Psoas muscle (tissue), 8 donors: ENCODE measurements at regions of chr16 and their contacts with region 1.

Region 1: GRCh38 chr16:66872943-66873684 is 7.2 kb upstream of the PDP2 start:
- DNase-seq: peak; percentile 93 to 94
- ATAC-seq: peak; percentile 92 to 97 (median 94)
- H3K4me3 ChIP-seq: peak overlapping the region; percentile 61
- H3K27ac ChIP-seq: peak overlapping the region; percentile 21
- H3K4me1 ChIP-seq: peaks cover 4% of the 10 kb centered on the region
- H3K27me3 ChIP-seq: no peaks in the 10 kb centered on the region
- CTCF ChIP-seq: peak; percentile 91

Region 2: DNA sequence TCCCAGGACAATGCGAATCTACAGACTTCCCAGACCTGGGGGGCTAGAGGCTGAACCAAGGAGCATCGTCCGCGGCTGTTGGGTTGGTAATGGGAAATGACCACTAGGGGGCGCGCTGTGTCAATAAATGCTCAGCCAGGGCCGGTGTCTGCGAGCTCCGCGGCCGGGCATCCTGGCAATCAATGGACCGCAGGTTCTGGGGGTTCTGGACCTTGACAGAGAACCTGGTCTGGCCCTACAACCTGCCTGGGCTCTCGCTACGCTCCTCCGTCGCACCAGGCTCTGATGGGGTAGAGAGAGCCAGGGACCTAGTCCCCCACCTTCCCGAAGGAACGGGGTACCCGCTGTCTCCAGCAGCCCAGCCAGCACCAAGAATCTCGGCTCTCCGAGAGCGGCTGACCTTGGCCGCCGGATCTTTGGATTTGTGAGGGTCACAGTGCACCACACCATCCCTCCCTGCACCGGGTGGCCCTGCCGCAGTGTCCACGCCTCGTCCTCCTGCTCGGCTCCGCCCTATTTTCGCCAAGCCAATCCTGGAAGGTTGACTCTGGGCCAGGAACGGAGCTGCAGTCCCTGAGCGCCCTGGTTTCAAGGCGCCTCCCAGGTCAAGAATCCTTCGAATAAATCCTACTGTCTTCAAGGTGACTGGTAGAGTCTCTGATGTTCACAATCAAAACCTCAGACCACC is 466.4 kb before region 1 on chr16:
- intact Hi-C with region 1: loop called (anchors 5 kb)
- DNase-seq: peak; percentile 85 to 91
- ATAC-seq: peak; percentile 88 to 97 (median 91)
- H3K4me3 ChIP-seq: peak overlapping the region; percentile 64
- H3K27ac ChIP-seq: no peak overlapping the region
- H3K4me1 ChIP-seq: no peaks in the 10 kb centered on the region
- H3K27me3 ChIP-seq: peaks cover 0 to 16% (median 0%) of the 10 kb centered on the region in 3 donors
- CTCF ChIP-seq: peak; percentile 89

Region 3: DNA sequence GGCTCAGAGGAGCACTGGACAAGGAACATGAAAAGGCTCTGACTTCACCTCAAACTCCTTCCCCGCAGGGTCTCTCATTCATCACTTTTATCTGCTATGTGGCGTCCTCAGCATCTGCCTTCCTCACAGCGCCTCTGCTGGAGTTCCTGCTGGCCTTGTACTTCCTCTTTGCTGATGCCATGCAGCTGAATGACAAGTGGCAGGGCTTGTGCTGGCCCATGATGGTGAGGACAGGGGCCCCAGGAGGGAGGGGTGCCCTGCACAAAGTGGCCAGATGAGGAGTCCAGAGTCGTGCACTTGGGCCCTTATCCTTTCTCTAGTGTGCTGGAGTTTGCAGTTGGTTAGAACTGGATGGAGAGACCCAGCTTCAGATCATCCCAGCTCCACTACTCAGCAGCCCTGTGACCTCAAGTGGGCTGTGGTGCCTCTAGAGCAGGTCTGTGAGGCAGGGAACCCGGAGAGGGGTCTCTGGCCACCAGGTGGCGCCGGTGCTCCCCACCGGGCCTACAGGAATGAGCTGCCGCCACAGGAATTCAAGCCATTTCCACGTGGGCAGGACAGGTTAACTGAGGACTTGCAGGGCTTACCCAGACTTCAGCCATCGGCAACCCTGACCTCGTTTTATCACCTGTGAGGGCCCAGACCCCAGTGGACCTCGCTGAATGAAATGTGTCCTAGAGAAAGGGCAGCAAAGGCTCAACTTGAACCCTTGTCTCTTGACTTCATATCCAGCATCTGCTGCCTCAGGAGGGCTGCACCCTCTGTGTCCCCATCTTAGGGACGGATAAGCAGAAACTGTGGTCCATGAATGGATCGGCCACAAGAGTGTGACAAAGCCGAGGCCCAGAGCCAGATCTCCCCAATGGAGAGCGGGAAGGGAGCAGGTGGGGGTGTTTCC is 264.6 kb before region 1 on chr16:
- intact Hi-C with region 1: loop called (anchors 2 kb)
- DNase-seq: peak; percentile 90 to 92
- ATAC-seq: peak; percentile 86 to 92 (median 90)
- H3K4me3 ChIP-seq: no peak overlapping the region
- H3K27ac ChIP-seq: no peak overlapping the region
- H3K4me1 ChIP-seq: no peaks in the 10 kb centered on the region
- H3K27me3 ChIP-seq: peaks cover 0 to 10% (median 7%) of the 10 kb centered on the region in 3 donors
- CTCF ChIP-seq: peak; percentile 92

Region 4: DNA sequence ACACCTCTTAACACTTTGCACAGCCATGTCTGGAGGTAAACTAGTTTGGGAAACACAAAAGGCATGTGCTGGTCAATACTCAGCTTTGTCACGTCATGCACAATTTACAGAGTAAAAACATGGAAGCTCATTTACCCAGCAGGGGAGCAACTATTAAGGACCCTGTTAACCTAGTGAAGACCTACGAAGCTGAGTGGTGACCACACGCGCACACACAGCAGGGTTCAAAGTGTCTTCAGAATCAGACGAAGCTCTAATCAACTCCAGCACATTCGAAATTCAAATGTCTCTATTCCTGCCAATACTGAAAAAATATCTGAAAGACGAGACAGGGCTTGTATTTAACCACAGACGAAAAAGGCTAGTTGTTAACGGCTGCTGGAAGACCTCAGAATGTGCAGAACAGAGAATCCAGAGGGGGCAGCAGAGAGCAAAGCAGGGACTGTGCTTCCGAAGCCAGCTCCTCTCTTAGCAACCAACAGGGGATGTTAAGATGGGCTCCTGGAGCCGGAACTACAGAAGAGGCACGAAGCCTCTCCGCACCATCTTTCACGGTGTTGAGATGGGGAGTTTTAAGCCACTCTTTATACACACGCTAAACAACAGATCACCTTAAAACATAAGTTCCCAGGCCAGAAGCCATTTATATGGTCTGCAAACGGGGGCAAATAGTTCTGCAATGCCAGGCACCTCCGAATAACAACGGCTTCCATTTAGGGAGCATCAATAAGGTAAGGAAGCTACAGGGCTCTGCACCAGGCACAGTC is 222.2 kb before region 1 on chr16:
- intact Hi-C with region 1: loop called in 1 of 2 experiments (anchors 5 kb)
- DNase-seq: peak; percentile 65 to 76
- ATAC-seq: peak; percentile 89 to 97 (median 92)
- H3K4me3 ChIP-seq: peak overlapping the region; percentile 11
- H3K27ac ChIP-seq: no peak overlapping the region
- H3K4me1 ChIP-seq: peaks cover 9% of the 10 kb centered on the region
- H3K27me3 ChIP-seq: no peaks in the 10 kb centered on the region
- CTCF ChIP-seq: peak; percentile 93

Region 5: GRCh38 chr16:66660422-66661209 is 212.5 kb before region 1 on chr16:
- intact Hi-C with region 1: loop called in 1 of 2 experiments (anchors 5 kb)
- DNase-seq: peak; percentile 65 to 79
- ATAC-seq: peak; percentile 94 to 98 (median 96)
- H3K4me3 ChIP-seq: peak overlapping the region; percentile 28
- H3K27ac ChIP-seq: peak overlapping the region; percentile 80
- H3K4me1 ChIP-seq: peaks cover 15% of the 10 kb centered on the region
- H3K27me3 ChIP-seq: no peaks in the 10 kb centered on the region
- CTCF ChIP-seq: peak; percentile 34

Region 6: DNA sequence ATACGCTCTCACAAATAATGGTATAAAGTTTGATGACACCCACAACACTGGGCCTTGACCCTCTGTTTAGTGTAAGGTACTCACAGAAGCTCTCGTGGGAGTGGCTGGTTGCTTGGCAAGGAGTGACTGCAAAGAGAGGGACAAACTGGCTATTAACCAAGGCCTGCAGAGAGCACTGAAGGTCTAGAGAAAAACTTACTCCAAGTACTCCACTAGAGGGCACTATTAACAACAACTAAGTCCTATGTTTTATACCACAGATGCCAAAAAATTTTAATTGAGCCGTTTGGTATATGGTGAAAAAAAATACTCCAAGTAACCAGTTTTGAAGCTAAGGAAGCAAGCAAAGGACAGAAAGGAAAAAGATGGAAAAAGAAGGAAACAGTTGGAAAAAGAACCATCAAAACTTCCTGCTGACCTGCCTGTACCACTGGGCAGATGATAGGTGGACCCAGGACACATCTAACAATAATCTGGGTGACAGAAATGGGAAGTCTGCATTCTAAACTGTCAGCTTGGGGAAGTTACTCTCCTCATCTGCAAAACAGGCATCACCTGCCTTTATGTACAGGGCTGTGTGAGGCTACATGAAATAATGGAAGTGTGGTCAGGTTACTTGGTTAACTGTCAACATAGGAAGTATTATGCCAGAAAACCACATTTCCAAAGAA is 144.9 kb before region 1 on chr16:
- intact Hi-C with region 1: loop called (anchors 5 kb)
- DNase-seq: no peak
- ATAC-seq: peak; percentile 77 to 94 (median 82)
- H3K4me3 ChIP-seq: no peak overlapping the region
- H3K27ac ChIP-seq: no peak overlapping the region
- H3K4me1 ChIP-seq: no peaks in the 10 kb centered on the region
- H3K27me3 ChIP-seq: no peaks in the 10 kb centered on the region
- CTCF ChIP-seq: peak; percentile 63

Region 7: DNA sequence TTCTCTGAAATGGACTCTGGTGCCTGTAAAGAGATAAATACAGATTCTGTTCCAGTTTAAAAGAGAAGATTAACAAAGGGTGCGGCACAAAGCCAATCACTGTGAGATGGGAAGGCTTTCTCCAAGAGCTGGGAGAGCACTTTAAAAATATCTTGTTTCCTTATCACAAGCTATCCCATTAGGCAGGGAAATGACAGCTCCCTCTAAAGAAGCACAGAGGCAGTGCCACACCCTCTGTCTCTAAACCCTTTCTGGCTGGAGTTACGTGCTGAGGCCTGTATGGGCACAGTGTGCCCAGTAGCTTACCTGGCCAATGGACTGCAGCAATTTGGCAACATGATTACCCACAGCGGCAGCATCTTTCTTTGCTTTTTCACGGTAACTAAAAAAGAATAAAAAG is 62.7 kb before region 1 on chr16:
- intact Hi-C with region 1: no loop called
- DNase-seq: no peak
- ATAC-seq: no peak
- H3K4me3 ChIP-seq: no peak overlapping the region
- H3K27ac ChIP-seq: no peak overlapping the region
- H3K4me1 ChIP-seq: no peaks in the 10 kb centered on the region
- H3K27me3 ChIP-seq: no peaks in the 10 kb centered on the region
- CTCF ChIP-seq: no peak